Activated CD8-positive, alpha-beta T cell treated with anti-CD3 and anti-CD28 coated beads, Interleukin-2, amount 10 ng/mL, durations not matched to agents 7 days and 5 days (primary cell): ENCODE measurements at regions of chr1 and their contacts with region 1.

Region 1: GRCh38 chr1:156006666-156007376 is 13.9 kb downstream of the SSR2 start:
- DNase-seq: no peak
- ATAC-seq: no peak
- H3K4me3 Mint-ChIP-seq: no peak overlapping the region
- H3K27ac Mint-ChIP-seq: no peak overlapping the region
- H3K4me1 Mint-ChIP-seq: peaks cover 34% of the 10 kb centered on the region
- H3K27me3 Mint-ChIP-seq: no peaks in the 10 kb centered on the region

Region 2: DNA sequence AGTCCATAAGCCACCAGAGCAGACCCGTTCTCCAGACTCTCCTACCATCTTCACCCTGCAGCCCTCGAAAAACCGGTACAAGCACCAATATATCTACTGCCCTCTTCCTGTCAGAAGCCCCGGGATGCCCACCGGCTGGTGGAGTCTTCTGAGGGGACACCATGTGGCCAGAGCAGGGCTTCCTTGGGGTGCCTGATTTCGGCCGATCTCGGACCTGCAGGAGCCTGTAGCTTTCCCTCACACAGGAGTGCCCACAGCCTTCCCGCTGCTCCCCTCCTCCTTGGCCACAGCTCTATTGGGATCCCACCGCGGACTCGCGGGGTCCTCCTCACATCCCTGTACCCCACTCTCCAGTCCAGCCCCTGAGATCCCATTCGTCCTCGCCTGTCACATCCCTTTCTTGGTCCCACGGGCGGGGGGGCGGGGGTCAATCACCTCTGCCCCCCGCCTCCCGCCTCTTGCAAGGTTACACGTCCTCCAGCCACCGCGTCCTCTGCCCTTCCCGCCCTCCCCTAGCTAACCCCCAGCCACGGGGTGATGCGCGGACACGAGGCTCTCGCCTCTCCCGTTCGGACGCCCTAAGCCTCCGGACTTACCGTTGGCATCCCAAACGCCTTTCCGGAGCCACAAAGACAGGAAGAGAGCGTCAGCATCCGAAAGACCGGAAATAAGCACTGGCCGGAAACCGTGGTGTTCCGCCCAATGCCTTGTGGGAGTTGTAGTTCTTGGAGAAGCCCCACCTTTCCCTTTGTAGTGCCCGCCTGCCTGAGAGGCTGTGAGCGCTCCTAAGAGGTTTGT is 13.7 kb after region 1 on chr1 and contains the start of gene SSR2:
- CTCF ChIA-PET with region 1: interaction called, 5 read pairs
- POLR2A ChIA-PET with region 1: interaction called, 14 read pairs
- DNase-seq: peak; percentile 93
- ATAC-seq: peak; percentile 99
- H3K4me3 Mint-ChIP-seq: peak within 1 kb of the TSS; percentile 98
- H3K27ac Mint-ChIP-seq: peak within 1 kb of the TSS; percentile 99
- H3K4me1 Mint-ChIP-seq: peaks cover 32% of the 10 kb centered on the region
- H3K27me3 Mint-ChIP-seq: peaks cover 9% of the 10 kb centered on the region
- total RNA-seq, gene SSR2: 216 to 233 TPM